MCF 10A (cell line): ENCODE measurements at regions of chrX and their contacts with region 1.

Region 1: DNA sequence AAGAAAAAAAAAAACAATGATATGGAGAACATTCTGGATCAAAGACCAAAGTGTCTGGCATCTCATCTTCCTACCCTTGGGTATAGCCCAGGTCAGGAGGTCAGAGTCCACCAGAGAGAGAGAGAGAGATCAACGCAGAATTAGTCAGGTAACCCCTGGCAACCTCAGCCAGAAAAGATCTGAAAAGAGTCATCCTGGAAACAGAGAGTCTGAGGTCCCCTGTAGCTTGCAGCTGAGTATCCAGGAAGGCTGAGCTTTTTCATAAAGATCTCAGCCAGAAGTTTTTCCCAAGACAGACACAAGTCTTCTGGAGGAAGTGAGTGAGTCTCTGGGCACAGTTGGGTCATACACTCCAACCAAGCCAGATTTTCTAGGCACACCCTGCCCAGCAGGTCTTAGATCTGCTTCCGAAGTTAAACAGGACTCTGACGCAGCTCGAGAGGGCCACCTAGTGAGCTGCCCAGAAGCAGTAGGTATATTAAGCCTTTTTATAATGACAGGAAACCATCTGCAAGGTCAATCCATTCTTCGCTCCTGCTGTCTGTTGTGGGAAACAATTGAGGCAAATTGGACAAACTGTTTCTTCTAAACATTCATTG is 35.7 kb downstream of the ACE2 start:
- DNase-seq: peak; percentile 83
- H3K4me3 Mint-ChIP-seq: no peak overlapping the region
- H3K27ac Mint-ChIP-seq: no peak overlapping the region
- H3K4me1 Mint-ChIP-seq: no peaks in the 10 kb centered on the region
- H3K27me3 Mint-ChIP-seq: peaks cover 69% of the 10 kb centered on the region
- CTCF ChIP-seq: peak; percentile 84

Region 2: DNA sequence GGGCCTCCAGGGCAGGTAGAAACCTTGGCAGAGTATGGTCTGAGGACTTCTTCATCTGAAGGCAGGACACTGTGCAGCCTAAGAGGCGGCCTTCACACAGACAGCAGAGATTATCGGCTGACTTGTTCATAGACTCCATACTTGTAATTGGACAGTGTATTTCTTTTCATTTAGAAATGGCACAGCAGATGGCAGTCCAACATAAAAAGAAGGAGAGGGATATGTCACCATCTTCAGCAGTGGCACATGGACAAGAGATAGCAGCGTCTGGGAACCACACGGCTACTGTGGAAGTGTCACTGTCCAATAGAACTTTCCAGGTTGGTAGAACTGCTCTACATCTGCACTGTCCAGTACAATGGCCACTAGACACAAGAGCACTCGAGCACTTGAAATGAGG is 1513.7 kb before region 1 on chrX:
- CTCF ChIA-PET with region 1: no interaction called
- POLR2A ChIA-PET with region 1: no interaction called
- intact Hi-C with region 1: no loop called
- DNase-seq: no peak
- H3K4me3 Mint-ChIP-seq: no peak overlapping the region
- H3K27ac Mint-ChIP-seq: no peak overlapping the region
- H3K4me1 Mint-ChIP-seq: no peaks in the 10 kb centered on the region
- H3K27me3 Mint-ChIP-seq: peaks cover 96% of the 10 kb centered on the region
- CTCF ChIP-seq: no peak

Region 3: DNA sequence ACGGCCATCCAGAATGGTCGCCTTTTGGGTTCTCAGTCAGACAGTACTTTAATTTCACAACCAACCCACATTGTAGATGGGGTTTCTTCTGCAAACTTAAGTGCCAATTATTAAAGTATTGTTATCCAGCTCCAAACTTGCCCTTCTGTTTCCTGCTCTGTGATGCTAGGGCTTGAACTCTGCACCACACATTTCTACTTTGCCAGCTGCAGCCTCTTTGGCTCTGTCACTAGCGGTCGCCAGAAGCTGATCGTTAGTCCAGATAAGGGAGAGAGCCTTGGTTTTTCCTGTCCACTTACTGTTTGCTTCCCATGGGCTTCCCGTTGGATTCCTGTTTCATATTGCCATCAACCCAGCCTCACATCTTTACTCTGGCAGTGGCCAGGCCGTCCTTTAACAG is 491.8 kb before region 1 on chrX:
- CTCF ChIA-PET with region 1: no interaction called
- POLR2A ChIA-PET with region 1: no interaction called
- intact Hi-C with region 1: no loop called
- DNase-seq: no peak
- H3K4me3 Mint-ChIP-seq: no peak overlapping the region
- H3K27ac Mint-ChIP-seq: no peak overlapping the region
- H3K4me1 Mint-ChIP-seq: no peaks in the 10 kb centered on the region
- H3K27me3 Mint-ChIP-seq: peaks cover 45% of the 10 kb centered on the region
- CTCF ChIP-seq: no peak

Region 4: GRCh38 chrX:15277604-15278003 is 287.5 kb before region 1 on chrX:
- CTCF ChIA-PET with region 1: no interaction called
- POLR2A ChIA-PET with region 1: no interaction called
- intact Hi-C with region 1: no loop called
- DNase-seq: no peak
- H3K4me3 Mint-ChIP-seq: no peak overlapping the region
- H3K27ac Mint-ChIP-seq: no peak overlapping the region
- H3K4me1 Mint-ChIP-seq: no peaks in the 10 kb centered on the region
- H3K27me3 Mint-ChIP-seq: peaks cover 15% of the 10 kb centered on the region
- CTCF ChIP-seq: no peak

Region 5: GRCh38 chrX:15299941-15300851 is 264.9 kb before region 1 on chrX:
- CTCF ChIA-PET with region 1: interaction called, 3 read pairs
- POLR2A ChIA-PET with region 1: interaction called, 3 read pairs
- intact Hi-C with region 1: loop called (anchors 2 kb)
- DNase-seq: peak; percentile 33
- H3K4me3 Mint-ChIP-seq: no peak overlapping the region
- H3K27ac Mint-ChIP-seq: no peak overlapping the region
- H3K4me1 Mint-ChIP-seq: no peaks in the 10 kb centered on the region
- H3K27me3 Mint-ChIP-seq: peaks cover 20% of the 10 kb centered on the region
- CTCF ChIP-seq: peak; percentile 38

Region 6: GRCh38 chrX:15493118-15493962 is 71.7 kb before region 1 on chrX and contains the start of gene PIR:
- CTCF ChIA-PET with region 1: interaction called, 119 read pairs
- POLR2A ChIA-PET with region 1: interaction called, 3 read pairs
- intact Hi-C with region 1: loop called (anchors 1 kb)
- DNase-seq: peak; percentile 96
- H3K4me3 Mint-ChIP-seq: peak within 1 kb of the TSS; percentile 76
- H3K27ac Mint-ChIP-seq: peak within 1 kb of the TSS; percentile 88
- H3K4me1 Mint-ChIP-seq: peaks cover 8% of the 10 kb centered on the region
- H3K27me3 Mint-ChIP-seq: no peaks in the 10 kb centered on the region
- CTCF ChIP-seq: peak; percentile 34
- total RNA-seq, gene PIR: 8.2 and 10.3 TPM in 2 replicates

Region 7: GRCh38 chrX:15511563-15511962 is 53.5 kb before region 1 on chrX:
- CTCF ChIA-PET with region 1: interaction called, 119 read pairs
- POLR2A ChIA-PET with region 1: interaction called, 4 read pairs
- intact Hi-C with region 1: no loop called
- DNase-seq: no peak
- H3K4me3 Mint-ChIP-seq: no peak overlapping the region
- H3K27ac Mint-ChIP-seq: no peak overlapping the region
- H3K4me1 Mint-ChIP-seq: no peaks in the 10 kb centered on the region
- H3K27me3 Mint-ChIP-seq: peaks cover 25% of the 10 kb centered on the region
- CTCF ChIP-seq: no peak

Region 8: GRCh38 chrX:15619061-15619777 is 54.1 kb after region 1 on chrX:
- CTCF ChIA-PET with region 1: no interaction called
- POLR2A ChIA-PET with region 1: no interaction called
- intact Hi-C with region 1: no loop called
- DNase-seq: peak; percentile 89
- H3K4me3 Mint-ChIP-seq: no peak overlapping the region
- H3K27ac Mint-ChIP-seq: no peak overlapping the region
- H3K4me1 Mint-ChIP-seq: peaks cover 5% of the 10 kb centered on the region
- H3K27me3 Mint-ChIP-seq: peaks cover 22% of the 10 kb centered on the region
- CTCF ChIP-seq: no peak

Region 9: GRCh38 chrX:15645258-15645657 is 80.2 kb after region 1 on chrX:
- CTCF ChIA-PET with region 1: interaction called, 19 read pairs
- POLR2A ChIA-PET with region 1: no interaction called
- intact Hi-C with region 1: no loop called
- DNase-seq: no peak
- H3K4me3 Mint-ChIP-seq: no peak overlapping the region
- H3K27ac Mint-ChIP-seq: no peak overlapping the region
- H3K4me1 Mint-ChIP-seq: no peaks in the 10 kb centered on the region
- H3K27me3 Mint-ChIP-seq: peaks cover 33% of the 10 kb centered on the region
- CTCF ChIP-seq: no peak